Activated CD4-positive, alpha-beta T cell treated with anti-CD3 and anti-CD28 coated beads for 36 hours (primary cell): ENCODE measurements at regions of chr16 and their contacts with region 1.

Region 1: DNA sequence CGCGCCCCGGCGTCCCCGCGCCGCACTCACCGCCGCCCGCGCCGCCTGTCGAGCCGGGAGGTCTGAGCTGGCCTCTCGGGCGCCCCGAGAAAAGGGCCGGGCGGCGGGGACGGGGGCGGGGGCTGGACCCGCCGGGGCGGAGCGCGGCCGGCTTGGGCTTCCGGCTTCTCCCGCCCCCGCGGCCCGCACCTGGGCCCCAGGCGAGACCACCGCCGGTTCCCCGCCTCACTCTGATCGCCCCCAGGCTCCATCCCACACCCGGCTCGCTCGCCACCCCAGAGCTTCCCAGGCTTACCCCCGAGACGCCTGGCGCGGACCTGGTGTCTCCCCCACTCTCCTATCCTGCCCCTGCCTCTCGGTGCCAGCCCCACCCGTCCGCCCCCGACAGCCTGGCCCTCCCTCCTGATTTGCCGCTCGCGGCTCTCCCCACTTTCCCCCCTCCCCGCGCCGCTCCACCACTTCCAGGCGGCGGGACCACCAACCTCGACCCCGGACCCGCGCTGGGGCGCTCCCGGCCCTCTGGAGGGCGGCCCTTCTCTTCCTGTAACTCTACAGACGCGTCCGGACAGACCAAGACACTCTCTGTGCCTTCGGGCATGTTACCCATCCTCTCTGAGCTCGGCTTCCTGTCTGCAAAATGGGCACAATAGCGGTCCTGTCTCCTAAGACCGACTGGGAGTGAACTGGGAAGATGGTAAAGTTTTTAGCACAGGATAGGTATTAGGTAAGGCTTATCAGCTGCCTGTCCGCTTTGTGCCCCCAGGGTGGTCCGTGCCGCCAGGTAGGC is at the start of gene LITAF:
- DNase-seq: peak; percentile 74
- ATAC-seq: peak; percentile 53
- H3K4me3 Mint-ChIP-seq: peak within 1 kb of the TSS; percentile 89
- H3K27ac Mint-ChIP-seq: peak within 1 kb of the TSS; percentile 90
- H3K4me1 Mint-ChIP-seq: peaks cover 32% of the 10 kb centered on the region
- H3K27me3 Mint-ChIP-seq: no peaks in the 10 kb centered on the region
- total RNA-seq, gene LITAF: 99.0 to 116 TPM

Region 2: GRCh38 chr16:11423315-11424117 is 163.5 kb before region 1 on chr16:
- CTCF ChIA-PET with region 1: no interaction called
- POLR2A ChIA-PET with region 1: no interaction called
- intact Hi-C with region 1: no loop called
- DNase-seq: no peak
- ATAC-seq: no peak
- H3K4me3 Mint-ChIP-seq: no peak overlapping the region
- H3K27ac Mint-ChIP-seq: no peak overlapping the region
- H3K4me1 Mint-ChIP-seq: no peaks in the 10 kb centered on the region
- H3K27me3 Mint-ChIP-seq: no peaks in the 10 kb centered on the region

Region 3: GRCh38 chr16:11560701-11561449 is 26.2 kb before region 1 on chr16:
- CTCF ChIA-PET with region 1: no interaction called
- POLR2A ChIA-PET with region 1: no interaction called
- intact Hi-C with region 1: loop called (anchors 2 kb)
- DNase-seq: peak; percentile 72
- ATAC-seq: peak; percentile 93
- H3K4me3 Mint-ChIP-seq: peak overlapping the region; percentile 71
- H3K27ac Mint-ChIP-seq: peak overlapping the region; percentile 94
- H3K4me1 Mint-ChIP-seq: peaks cover 84% of the 10 kb centered on the region
- H3K27me3 Mint-ChIP-seq: no peaks in the 10 kb centered on the region

Region 4: DNA sequence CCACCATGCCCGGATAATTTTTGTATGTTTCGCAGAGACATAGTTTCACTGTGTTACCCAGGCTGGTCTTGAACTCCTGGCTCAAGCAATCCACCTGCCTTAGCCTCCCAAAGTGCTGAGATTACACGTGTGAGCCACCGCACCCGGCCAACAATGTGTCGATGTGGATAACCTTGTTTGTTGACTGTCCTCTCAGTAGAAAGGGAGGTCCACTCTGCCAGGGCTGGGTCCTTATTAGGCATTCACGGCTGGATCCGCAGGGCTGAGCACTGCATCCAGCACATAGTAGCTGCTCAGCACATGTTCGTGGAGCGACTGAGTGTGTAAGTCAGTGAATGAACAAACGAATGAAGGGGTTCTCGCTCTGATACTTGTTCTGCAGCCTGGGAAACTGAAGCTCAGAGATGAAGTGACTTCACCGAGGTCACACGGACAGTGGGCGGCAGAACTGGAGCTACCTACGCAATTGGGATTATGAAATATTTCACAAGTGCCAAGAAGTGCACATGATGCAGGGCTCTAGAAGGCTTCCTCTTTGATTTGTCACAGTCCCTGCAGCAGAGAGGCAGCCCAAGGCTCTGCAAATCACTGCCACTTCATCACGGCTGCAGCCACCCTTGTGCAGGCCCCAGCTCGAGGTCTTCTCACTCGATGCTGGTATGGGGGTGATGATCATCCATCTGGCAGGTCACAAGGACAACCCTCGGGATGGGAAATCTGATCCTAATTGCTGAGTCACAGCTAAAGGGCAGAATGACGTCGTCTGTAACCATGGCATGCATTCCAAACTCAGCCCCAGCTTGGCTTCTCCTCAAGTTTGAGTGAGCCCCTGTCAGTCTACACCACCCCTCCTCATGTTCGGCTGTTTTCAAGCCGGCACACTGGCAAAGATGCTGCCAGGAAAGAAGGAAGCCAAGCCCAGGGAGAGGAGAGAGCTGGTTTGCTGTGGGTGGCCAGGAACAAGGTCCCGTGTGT is 53.2 kb after region 1 on chr16:
- CTCF ChIA-PET with region 1: interaction called, 16 read pairs
- POLR2A ChIA-PET with region 1: no interaction called
- intact Hi-C with region 1: no loop called
- DNase-seq: no peak
- ATAC-seq: no peak
- H3K4me3 Mint-ChIP-seq: no peak overlapping the region
- H3K27ac Mint-ChIP-seq: no peak overlapping the region
- H3K4me1 Mint-ChIP-seq: peaks cover 8% of the 10 kb centered on the region
- H3K27me3 Mint-ChIP-seq: no peaks in the 10 kb centered on the region

Region 5: GRCh38 chr16:11783319-11784037 is 196.4 kb after region 1 on chr16:
- CTCF ChIA-PET with region 1: no interaction called
- POLR2A ChIA-PET with region 1: no interaction called
- intact Hi-C with region 1: loop called in 1 of 2 experiments (anchors 5 kb)
- DNase-seq: peak; percentile 65
- ATAC-seq: peak; percentile 80
- H3K4me3 Mint-ChIP-seq: peak overlapping the region; percentile 74
- H3K27ac Mint-ChIP-seq: peak overlapping the region; percentile 97
- H3K4me1 Mint-ChIP-seq: peaks cover 74% of the 10 kb centered on the region
- H3K27me3 Mint-ChIP-seq: no peaks in the 10 kb centered on the region

Region 6: DNA sequence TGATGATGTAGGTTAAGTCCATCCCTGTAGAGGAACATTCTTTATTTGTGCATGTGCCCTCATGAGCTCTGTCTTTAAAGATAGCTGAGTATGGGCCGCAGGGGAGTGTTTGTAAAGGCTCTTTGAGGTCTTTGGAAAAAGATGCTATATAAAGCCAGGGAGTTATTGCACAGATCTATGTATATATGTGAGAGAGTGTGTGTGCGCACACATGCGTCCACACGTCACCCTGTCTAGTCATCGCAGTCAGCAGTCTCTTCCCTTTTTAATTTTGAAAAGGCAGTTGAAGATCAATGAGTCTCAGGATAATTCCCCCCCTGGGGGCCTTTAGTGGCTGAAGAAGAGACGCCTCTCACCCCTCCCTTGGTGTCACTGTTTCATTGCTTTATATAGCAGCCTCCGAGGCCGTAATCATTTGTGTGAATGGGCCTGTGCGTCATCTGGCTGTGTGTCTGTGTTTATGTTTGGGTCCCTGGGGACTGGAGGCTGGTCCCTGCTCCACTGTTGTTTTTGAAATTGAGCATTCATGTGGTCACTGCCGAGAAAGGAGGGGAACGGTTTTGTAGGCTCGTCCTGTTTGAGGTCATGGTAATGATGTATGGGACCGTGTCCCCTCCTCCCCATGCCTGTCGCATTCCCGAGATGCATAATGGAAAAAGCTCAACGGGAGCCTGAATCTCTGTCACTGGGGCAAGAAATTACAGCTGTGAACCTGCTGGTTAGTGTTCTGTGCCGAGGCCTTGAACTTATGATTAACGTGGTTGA is 533.4 kb after region 1 on chr16:
- CTCF ChIA-PET with region 1: no interaction called
- POLR2A ChIA-PET with region 1: no interaction called
- intact Hi-C with region 1: no loop called
- DNase-seq: no peak
- ATAC-seq: no peak
- H3K4me3 Mint-ChIP-seq: no peak overlapping the region
- H3K27ac Mint-ChIP-seq: no peak overlapping the region
- H3K4me1 Mint-ChIP-seq: peaks cover 16% of the 10 kb centered on the region
- H3K27me3 Mint-ChIP-seq: no peaks in the 10 kb centered on the region